ENCODE measurements at regions of chr2 and their contacts with region 1.

Region 1: DNA sequence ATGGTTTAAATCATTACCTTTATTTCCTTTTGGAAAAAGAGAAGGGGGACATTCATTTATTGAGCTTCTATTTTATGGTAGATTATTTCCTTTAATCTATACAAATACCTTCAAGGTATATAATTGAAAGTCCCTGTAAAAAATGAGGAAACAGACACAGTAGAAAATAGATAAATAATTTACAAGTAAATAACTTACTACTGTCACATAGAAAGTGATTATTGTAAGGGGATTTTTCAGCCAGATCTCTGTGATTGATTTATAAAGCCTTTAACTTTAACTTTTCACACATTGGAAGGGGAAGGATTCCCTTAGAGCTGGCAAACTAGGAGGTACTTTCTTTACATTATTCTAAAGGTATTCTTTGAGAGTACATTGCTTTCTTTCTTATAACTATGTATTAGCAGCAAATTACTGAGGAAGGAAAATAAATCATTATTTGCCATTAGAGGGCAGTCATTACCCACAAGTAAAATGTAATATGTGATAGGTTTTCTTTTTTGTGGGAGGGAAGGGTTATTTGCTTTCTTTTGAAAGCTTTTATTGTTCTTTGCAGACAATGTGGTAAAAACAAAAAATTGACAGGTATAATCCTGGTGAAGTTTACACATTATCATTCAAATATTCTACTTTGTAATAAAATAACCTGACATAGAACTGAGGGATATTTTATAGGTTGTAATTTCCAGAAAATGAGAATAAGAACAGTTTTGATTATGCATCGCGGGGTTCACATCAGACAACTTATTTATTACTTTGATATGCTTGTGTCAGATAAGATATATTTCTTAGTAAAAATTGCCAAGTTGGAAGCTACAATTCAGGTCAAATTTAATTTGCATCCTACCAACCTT is 24.8 kb upstream of the RPE start:
- DNase-seq: peak; percentile 60
- H3K4me3 ChIP-seq: no peak overlapping the region
- H3K27ac ChIP-seq: no peak overlapping the region
- H3K4me1 ChIP-seq: no peaks in the 10 kb centered on the region
- H3K27me3 ChIP-seq: peaks cover 2 to 6% of the 10 kb centered on the region in 2 experiments
- CTCF ChIP-seq: peak in 1 of 2 donors; percentile 9
- POLR2A ChIP-seq: no peak

Region 2: DNA sequence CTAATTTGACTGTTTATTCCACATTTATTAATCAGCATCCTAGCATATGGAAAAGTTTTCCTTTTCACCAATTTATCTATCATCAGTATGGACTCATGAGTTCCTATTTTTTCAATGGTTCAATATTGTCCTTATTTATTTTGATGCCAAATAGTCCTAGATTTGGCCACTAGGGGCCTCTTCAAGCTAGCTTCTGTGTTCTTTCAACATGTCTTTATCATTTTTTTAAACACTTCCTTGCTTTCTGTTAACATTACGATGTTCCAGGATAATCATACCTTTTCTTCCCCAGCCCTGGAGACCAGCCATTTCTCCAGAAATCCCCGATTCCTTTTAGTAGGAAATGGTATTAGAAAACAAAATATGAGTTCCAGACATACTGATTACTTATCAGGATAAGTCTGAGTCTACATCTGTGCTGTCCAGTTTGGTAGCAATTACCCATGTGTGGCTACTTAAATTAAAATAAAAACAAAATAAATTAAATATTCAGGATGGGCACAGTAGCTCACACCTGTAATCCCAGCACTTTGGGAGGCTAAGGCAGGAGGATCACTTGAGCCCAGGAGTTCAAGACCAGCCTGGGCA is 95.4 kb after region 1 on chr2:
- CTCF ChIA-PET with region 1: no interaction called
- POLR2A ChIA-PET with region 1: no interaction called
- dilution Hi-C with region 1: no loop called
- intact Hi-C with region 1: loop called (anchors 2 kb)
- DNase-seq: peak; percentile 78
- H3K4me3 ChIP-seq: peak overlapping the region in 1 of 3 experiments; percentile 17
- H3K27ac ChIP-seq: no peak overlapping the region
- H3K4me1 ChIP-seq: no peaks in the 10 kb centered on the region
- H3K27me3 ChIP-seq: no peaks in the 10 kb centered on the region
- CTCF ChIP-seq: peak; percentile 49 to 52
- POLR2A ChIP-seq: no peak

Region 3: DNA sequence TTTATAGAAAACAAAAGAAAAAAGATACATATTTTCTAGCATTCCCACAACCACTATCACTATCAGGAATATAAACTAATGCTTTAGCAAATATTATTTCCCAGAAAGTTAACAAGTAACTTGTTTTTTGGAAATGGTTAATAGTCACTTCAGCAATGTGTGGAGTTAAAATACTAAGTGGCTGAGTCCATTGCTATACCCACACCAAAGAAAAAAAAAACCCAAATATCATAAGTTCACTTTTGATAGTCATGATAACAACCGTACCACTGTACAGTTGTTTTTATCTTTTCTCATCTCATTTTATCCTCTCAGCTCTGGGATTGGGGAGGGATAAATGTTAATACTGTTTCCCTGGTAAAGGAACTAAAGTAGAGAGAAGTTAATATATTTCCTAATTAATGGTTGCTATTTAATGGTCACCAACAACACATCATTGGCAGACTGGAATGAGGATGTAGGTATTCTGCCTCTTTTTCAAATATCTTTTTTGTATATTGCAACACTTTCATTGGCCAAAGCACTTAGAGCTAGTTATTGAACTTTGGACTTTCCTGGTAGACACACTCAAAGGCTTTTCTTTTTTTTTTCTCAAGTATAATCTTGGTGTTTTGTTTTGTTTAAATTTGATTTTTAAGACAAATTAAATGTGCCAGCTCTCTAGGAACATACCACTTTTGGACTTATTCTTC is 212.0 kb after region 1 on chr2:
- CTCF ChIA-PET with region 1: interaction called, 46 read pairs
- POLR2A ChIA-PET with region 1: no interaction called
- dilution Hi-C with region 1: no loop called
- intact Hi-C with region 1: no loop called
- DNase-seq: no peak
- H3K4me3 ChIP-seq: no peak overlapping the region
- H3K27ac ChIP-seq: no peak overlapping the region
- H3K4me1 ChIP-seq: no peaks in the 10 kb centered on the region
- H3K27me3 ChIP-seq: no peaks in the 10 kb centered on the region
- CTCF ChIP-seq: no peak
- POLR2A ChIP-seq: no peak